Posterior vena cava (tissue), 2 donors: ENCODE measurements at regions of chr10 and their contacts with region 1.

Region 1: GRCh38 chr10:48656241-48656913 is 28.3 kb upstream of the WDFY4 start:
- DNase-seq: peak; percentile 99

Region 2: GRCh38 chr10:48363617-48364355 is 292.6 kb before region 1 on chr10:
- intact Hi-C with region 1: loop called (anchors 5 to 10 kb)
- DNase-seq: no peak

Region 3: GRCh38 chr10:48551861-48552591 is 104.4 kb before region 1 on chr10:
- intact Hi-C with region 1: loop called (anchors 1 to 2 kb)
- DNase-seq: no peak

Region 4: DNA sequence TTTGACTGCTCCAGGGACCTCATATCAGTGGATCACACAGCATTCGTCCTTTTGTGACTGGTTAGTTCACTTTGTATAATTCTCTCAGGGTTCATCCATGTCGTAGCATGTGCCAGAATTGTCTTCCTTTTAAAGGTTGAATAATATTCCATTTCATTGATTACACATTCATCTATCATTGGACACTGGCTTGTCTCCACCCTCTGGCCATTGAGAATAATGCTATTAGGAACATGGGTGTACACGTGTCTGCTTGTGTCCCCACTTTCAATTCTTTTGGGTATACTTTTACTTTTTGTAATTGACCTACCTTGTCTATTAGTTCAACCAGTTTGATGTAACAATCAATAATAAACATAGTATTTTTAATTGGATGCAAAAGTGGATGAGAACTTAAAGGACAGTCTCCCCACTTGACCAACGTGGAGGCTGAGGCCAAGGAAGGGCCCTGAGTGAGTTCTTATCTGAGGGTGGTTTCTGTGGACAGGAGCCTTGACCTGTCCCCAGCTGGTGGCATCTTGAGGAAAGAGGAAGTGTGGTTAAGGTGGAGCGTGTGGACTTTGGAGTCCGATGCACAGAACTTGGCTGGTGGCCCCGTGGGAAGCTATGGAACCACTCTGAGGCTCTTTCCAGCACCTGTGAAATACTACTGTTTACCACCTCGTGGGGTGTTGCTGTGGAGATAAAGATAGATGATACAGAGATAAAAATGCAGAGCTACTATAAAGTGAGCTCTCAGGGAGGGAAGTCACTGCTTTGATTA is 44.9 kb after region 1 on chr10:
- intact Hi-C with region 1: no loop called
- DNase-seq: no peak

Region 5: GRCh38 chr10:48976196-48976595 is 319.8 kb after region 1 on chr10:
- intact Hi-C with region 1: loop called in 1 of 2 experiments (anchors 5 kb)
- DNase-seq: no peak